Endothelial cell of umbilical vein (primary cell): ENCODE measurements at regions of chr4 and their contacts with region 1.

Region 1: DNA sequence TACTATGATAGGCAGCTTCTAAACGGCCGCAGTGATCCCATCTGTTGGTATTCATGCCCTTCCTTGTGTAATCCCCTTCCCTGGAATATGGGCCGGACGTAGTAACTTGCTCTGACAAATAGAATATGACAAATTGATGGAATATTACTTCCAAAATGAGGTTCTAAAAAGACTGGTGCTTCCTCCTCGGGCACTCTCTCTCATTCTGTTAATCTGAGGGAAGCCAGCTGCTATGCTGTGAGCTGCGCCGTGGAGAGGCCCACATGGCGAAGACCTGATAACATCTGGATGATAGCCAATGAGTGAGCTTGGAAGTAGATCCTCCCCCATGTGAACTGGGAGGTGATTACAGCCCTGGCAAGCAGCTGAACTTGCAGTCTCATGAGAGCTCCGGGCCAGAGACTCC is 27.2 kb upstream of the SLC25A4 start:
- DNase-seq: peak; percentile 51
- H3K4me3 ChIP-seq: no peak overlapping the region
- H3K27ac ChIP-seq: no peak overlapping the region
- H3K4me1 ChIP-seq: peaks cover 9% of the 10 kb centered on the region
- H3K27me3 ChIP-seq: no peaks in the 10 kb centered on the region
- CTCF ChIP-seq: no peak
- POLR2A ChIP-seq: no peak

Region 2: GRCh38 chr4:184228056-184228705 is 887.6 kb before region 1 on chr4:
- CTCF ChIA-PET with region 1: no interaction called
- POLR2A ChIA-PET with region 1: no interaction called
- dilution Hi-C with region 1: no loop called
- intact Hi-C with region 1: no loop called
- DNase-seq: no peak
- H3K4me3 ChIP-seq: no peak overlapping the region
- H3K27ac ChIP-seq: no peak overlapping the region
- H3K4me1 ChIP-seq: no peaks in the 10 kb centered on the region
- H3K27me3 ChIP-seq: no peaks in the 10 kb centered on the region
- CTCF ChIP-seq: no peak
- POLR2A ChIP-seq: no peak

Region 3: DNA sequence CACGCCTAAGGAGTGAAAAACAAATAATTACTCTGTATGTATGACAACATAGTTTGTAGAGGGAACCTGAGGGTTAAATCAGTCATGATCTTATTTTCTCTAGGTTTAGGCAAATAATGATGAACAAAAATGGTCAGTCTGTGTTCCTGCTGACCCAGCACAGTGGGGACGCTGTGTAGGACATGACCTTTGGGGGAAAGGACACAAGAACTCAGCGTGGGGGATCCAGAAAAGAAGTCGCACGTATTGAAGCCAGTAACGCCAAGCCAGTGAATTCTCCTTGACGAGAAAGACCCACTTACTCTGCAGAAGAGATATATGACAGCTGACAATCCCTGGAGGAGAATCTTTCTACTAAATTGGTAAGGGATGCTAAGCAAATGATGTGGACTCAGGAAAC is 61.0 kb before region 1 on chr4:
- CTCF ChIA-PET with region 1: no interaction called
- POLR2A ChIA-PET with region 1: no interaction called
- dilution Hi-C with region 1: no loop called
- intact Hi-C with region 1: no loop called
- DNase-seq: no peak
- H3K4me3 ChIP-seq: no peak overlapping the region
- H3K27ac ChIP-seq: no peak overlapping the region
- H3K4me1 ChIP-seq: no peaks in the 10 kb centered on the region
- H3K27me3 ChIP-seq: peaks cover 0 to 5% of the 10 kb centered on the region in 2 experiments
- CTCF ChIP-seq: no peak
- POLR2A ChIP-seq: no peak

Region 4: GRCh38 chr4:185128272-185129119 is 12.7 kb after region 1 on chr4:
- CTCF ChIA-PET with region 1: interaction called, 6 read pairs
- POLR2A ChIA-PET with region 1: no interaction called
- dilution Hi-C with region 1: no loop called
- intact Hi-C with region 1: loop called (anchors 1 kb)
- DNase-seq: peak; percentile 18
- H3K4me3 ChIP-seq: peak overlapping the region; percentile 35 to 64 (median 52)
- H3K27ac ChIP-seq: no peak overlapping the region
- H3K4me1 ChIP-seq: peaks cover 15% of the 10 kb centered on the region
- H3K27me3 ChIP-seq: peaks cover 7% of the 10 kb centered on the region in 2 experiments
- CTCF ChIP-seq: peak in 1 of 2 donors; percentile 17
- POLR2A ChIP-seq: no peak